T-cell (primary cell): ENCODE measurements at regions of chr16 and their contacts with region 1.

Region 1: DNA sequence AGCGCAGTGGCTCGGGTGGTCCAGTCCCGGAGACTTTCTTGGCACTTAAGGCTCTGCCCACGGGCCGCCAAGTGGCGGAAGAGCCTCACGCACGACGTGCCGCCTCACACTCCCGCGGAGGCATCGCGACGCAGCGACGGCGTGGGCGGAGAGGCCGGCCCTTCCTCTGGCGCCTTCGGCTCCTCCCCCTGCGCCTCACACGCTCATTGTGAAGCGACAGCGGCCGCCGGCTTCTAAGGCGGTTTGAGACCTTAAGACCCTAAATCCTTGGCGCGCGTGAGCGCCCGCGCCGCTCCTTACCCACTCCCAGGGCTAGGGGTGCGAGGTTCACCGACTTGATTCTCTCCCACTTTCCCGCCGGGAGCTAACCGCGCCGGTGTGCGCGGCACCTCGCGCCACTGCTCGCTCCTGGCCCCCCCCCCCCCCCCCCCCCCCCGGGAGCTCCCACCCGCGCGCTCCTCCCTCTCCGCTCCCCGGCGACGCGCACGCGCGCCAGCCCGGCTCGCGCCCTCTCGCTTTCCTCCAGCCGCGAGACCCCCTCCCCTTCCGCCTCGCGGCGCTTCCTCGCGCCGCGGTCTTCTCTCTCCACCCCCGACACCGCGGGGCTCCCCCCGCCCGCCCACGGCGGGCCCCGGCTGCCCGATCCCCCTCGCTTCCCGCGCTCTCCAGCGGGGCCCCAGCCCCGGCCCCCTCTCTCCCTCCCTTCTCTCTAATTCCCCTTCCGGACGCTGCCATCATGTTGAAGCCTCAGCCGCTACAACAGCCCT is at the start of gene ATXN2L:
- DNase-seq: peak; percentile 86 to 97 (median 91)
- ATAC-seq: peak; percentile 61 to 73 (median 67)
- H3K4me3 ChIP-seq: peak within 1 kb of the TSS; percentile 64 to 95
- H3K4me3 Mint-ChIP-seq: peak within 1 kb of the TSS; percentile 96 to 98 (median 98)
- H3K27ac ChIP-seq: peak within 1 kb of the TSS; percentile 98
- H3K27ac Mint-ChIP-seq: peak within 1 kb of the TSS; percentile 96 to 98
- H3K4me1 ChIP-seq: peaks cover 22% of the 10 kb centered on the region in 2 experiments
- H3K4me1 Mint-ChIP-seq: peaks cover 36 to 50% (median 42%) of the 10 kb centered on the region in 3 donors
- H3K27me3 ChIP-seq: no peaks in the 10 kb centered on the region
- H3K27me3 Mint-ChIP-seq: no peaks in the 10 kb centered on the region
- total RNA-seq, gene ATXN2L: 273 to 345 (median 281) TPM

Region 2: GRCh38 chr16:28553776-28554633 is 268.7 kb before region 1 on chr16 and contains the start of gene SGF29:
- CTCF ChIA-PET with region 1: interaction called in 1 of 2 experiments, 4 read pairs
- POLR2A ChIA-PET with region 1: interaction called in 1 of 2 experiments, 10 read pairs
- DNase-seq: peak; percentile 86 to 98 (median 91)
- ATAC-seq: peak; percentile 86 to 93 (median 86)
- H3K4me3 ChIP-seq: peak within 1 kb of the TSS; percentile 75 to 84
- H3K4me3 Mint-ChIP-seq: peak within 1 kb of the TSS; percentile 88
- H3K27ac ChIP-seq: peak within 1 kb of the TSS; percentile 94
- H3K27ac Mint-ChIP-seq: peak within 1 kb of the TSS; percentile 96 to 97
- H3K4me1 ChIP-seq: peaks cover 15 to 25% of the 10 kb centered on the region in 2 experiments
- H3K4me1 Mint-ChIP-seq: peaks cover 31 to 51% (median 39%) of the 10 kb centered on the region in 3 donors
- H3K27me3 ChIP-seq: peaks cover 0 to 1% of the 10 kb centered on the region in 2 experiments
- H3K27me3 Mint-ChIP-seq: no peaks in the 10 kb centered on the region
- total RNA-seq, gene SGF29: 52.6 to 79.3 (median 74.6) TPM